Esophagus squamous epithelium (tissue), 5 donors: ENCODE measurements at regions of chr14 and their contacts with region 1.

Region 1: DNA sequence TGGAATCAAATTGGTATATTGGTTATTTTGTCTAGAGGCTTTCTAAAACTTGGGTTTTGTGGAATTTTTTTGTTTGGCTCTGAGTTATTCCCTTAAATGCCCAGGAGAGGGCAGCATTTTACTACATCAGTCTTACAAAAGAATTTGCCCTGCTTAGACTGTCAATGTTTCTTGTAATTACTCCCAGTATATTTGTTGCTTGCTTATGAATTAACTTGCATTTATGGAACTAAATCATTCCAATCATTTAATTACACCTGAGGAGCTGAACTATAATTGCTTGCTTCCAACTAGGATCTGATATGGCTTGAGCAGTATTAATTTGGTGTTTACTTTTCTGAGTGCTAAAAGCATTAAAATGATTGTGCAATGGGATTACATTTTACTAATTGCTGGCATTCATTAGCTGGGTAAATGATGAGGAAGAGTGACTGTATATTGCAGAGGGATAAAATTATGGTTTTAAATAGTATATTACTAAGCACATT is 48.7 kb downstream of the MIPOL1 start:
- DNase-seq: no peak
- H3K4me3 ChIP-seq: no peak overlapping the region
- H3K27ac ChIP-seq: no peak overlapping the region
- H3K4me1 ChIP-seq: peaks cover 0 to 20% (median 0%) of the 10 kb centered on the region in 3 donors
- H3K27me3 ChIP-seq: no peaks in the 10 kb centered on the region
- CTCF ChIP-seq: peak in 5 of 6 experiments; percentile 62 to 84 (median 72)
- POLR2A ChIP-seq: no peak

Region 2: GRCh38 chr14:37594238-37594914 is 347.9 kb after region 1 on chr14:
- intact Hi-C with region 1: loop called (anchors 5 kb)
- DNase-seq: no peak
- H3K4me3 ChIP-seq: peak overlapping the region; percentile 58 to 72 (median 62)
- H3K27ac ChIP-seq: peak overlapping the region; percentile 89 to 95 (median 92)
- H3K4me1 ChIP-seq: peaks cover 16 to 69% (median 27%) of the 10 kb centered on the region in 3 donors
- H3K27me3 ChIP-seq: peaks cover 0 to 99% (median 27%) of the 10 kb centered on the region in 4 donors
- CTCF ChIP-seq: peak; percentile 35 to 91 (median 78)
- POLR2A ChIP-seq: peak in 1 of 4 donors; percentile 8